ENCODE measurements at regions of chr7 and their contacts with region 1.

Region 1: DNA sequence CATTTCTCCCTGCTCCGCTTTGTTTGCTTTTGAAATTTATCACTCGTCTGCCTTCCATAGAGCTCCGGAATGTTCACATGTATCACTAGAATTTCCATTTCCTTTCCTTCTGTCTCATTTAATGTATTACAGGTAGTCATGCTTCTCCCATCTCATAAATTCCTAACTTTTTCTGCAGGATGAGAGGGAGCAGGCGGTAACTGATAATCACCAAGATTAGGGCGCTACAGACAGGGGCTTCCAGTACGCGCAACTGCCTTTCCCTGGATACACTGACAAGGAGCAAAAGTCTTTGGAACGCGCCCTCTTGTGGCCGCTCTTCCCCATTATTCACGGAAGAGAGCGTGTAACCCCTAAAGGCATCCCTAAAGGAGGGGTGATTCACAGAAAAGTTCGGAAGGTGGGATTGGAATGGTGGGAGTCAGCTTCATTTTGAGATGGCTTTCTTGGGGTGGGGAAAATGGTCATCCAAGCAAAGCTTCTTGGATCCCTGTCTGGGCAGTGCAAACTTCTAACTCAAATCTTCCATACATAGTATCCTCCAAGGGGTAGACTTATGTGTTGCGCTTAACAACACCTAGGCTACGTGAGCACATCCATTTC is 6.5 kb downstream of the INHBA start:
- DNase-seq: peak; percentile 88
- ATAC-seq: peak; percentile 56
- H3K4me3 ChIP-seq: peak overlapping the region; percentile 95
- H3K27ac ChIP-seq: peak overlapping the region; percentile 94
- H3K4me1 ChIP-seq: peaks cover 27% of the 10 kb centered on the region
- H3K27me3 ChIP-seq: no peaks in the 10 kb centered on the region
- CTCF ChIP-seq: peak; percentile 90

Region 2: GRCh38 chr7:41005381-41005911 is 691.0 kb before region 1 on chr7:
- CTCF ChIA-PET with region 1: no interaction called
- POLR2A ChIA-PET with region 1: interaction called, 3 read pairs
- intact Hi-C with region 1: loop called (anchors 2 kb)
- DNase-seq: peak; percentile 81
- ATAC-seq: peak; percentile 43
- H3K4me3 ChIP-seq: no peak overlapping the region
- H3K27ac ChIP-seq: peak overlapping the region; percentile 84
- H3K4me1 ChIP-seq: peaks cover 54% of the 10 kb centered on the region
- H3K27me3 ChIP-seq: no peaks in the 10 kb centered on the region
- CTCF ChIP-seq: no peak

Region 3: GRCh38 chr7:41224063-41224806 is 472.2 kb before region 1 on chr7:
- CTCF ChIA-PET with region 1: no interaction called
- POLR2A ChIA-PET with region 1: no interaction called
- intact Hi-C with region 1: loop called (anchors 1 kb)
- DNase-seq: peak; percentile 98
- ATAC-seq: peak; percentile 85
- H3K4me3 ChIP-seq: no peak overlapping the region
- H3K27ac ChIP-seq: peak overlapping the region; percentile 98
- H3K4me1 ChIP-seq: peaks cover 38% of the 10 kb centered on the region
- H3K27me3 ChIP-seq: no peaks in the 10 kb centered on the region
- CTCF ChIP-seq: no peak

Region 4: DNA sequence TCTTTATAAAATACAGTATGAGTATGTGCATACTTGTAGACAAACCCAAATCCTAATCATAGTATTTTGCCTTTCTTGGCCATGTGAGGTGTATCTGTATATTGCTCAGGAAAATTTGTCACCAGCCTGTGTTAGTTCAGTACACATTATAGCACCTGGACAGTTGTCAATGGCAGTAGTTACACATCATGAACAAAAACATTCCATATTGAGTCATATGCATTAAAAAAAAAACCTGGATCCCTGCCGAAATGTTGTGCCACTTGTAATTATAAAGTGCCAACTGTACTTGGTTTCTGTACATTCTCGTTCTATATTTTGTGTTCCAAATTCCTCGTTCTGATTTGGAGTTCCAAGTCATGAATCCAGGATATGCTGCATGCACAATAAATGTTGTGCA is 403.9 kb before region 1 on chr7:
- CTCF ChIA-PET with region 1: no interaction called
- POLR2A ChIA-PET with region 1: no interaction called
- intact Hi-C with region 1: loop called (anchors 1 kb)
- DNase-seq: peak; percentile 93
- ATAC-seq: peak; percentile 99
- H3K4me3 ChIP-seq: no peak overlapping the region
- H3K27ac ChIP-seq: peak overlapping the region; percentile 28
- H3K4me1 ChIP-seq: peaks cover 15% of the 10 kb centered on the region
- H3K27me3 ChIP-seq: no peaks in the 10 kb centered on the region
- CTCF ChIP-seq: no peak

Region 5: GRCh38 chr7:41573018-41573417 is 123.4 kb before region 1 on chr7:
- CTCF ChIA-PET with region 1: no interaction called
- POLR2A ChIA-PET with region 1: no interaction called
- intact Hi-C with region 1: loop called (anchors 5 kb)
- DNase-seq: peak; percentile 88
- ATAC-seq: peak; percentile 89
- H3K4me3 ChIP-seq: no peak overlapping the region
- H3K27ac ChIP-seq: peak overlapping the region; percentile 67
- H3K4me1 ChIP-seq: peaks cover 37% of the 10 kb centered on the region
- H3K27me3 ChIP-seq: no peaks in the 10 kb centered on the region
- CTCF ChIP-seq: no peak